ENCODE measurements at regions of chr16 and their contacts with region 1.

Region 1: DNA sequence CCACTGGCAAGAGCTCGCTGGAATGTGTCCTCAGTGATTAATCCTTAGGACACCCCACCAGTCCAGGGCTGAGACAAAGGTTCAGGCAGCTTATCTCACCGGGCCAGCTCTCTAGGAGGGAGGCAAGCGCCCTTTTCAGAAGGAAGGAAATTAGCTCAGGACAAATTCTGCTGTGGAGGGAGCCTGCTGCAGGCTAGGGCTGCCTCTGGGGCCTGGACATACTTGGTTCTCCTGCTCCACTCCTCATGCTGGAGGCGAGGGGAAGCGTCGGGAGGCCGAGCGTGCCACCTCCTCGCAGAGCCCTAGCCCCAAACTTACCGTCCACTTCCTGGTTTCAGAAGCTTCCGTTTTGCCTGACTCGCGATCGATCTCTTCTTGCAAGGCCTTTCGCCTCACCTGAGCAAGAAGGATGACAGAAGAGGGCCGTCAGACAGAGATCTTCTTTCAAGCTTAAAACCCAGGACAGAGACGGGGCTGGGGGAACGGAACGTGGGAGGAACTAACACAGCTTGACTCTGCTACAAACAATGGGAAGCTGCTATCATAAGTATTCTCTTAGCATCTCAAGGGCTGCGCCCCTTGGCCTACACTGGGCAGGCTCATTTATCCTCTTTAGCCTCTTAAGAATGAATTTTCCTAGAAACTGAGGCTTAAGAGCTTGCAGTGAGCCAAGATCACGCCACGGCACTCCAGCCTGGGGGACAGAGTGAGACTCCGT is 7.7 kb downstream of the KNOP1 start:
- DNase-seq: peak; percentile 29 to 79 (median 54)
- ATAC-seq: peak; percentile 88
- H3K4me3 ChIP-seq: no peak overlapping the region
- H3K27ac ChIP-seq: peak overlapping the region; percentile 61; the same call in 2 of the 3 replicates
- H3K4me1 ChIP-seq: peaks cover 25 to 43% of the 10 kb centered on the region in 2 experiments; a peak in 4 of 5 replicates
- H3K27me3 ChIP-seq: no peaks in the 10 kb centered on the region
- CTCF ChIP-seq: no peak
- EP300 ChIP-seq: no peak; the same call in 1 of the 2 replicates
- POLR2A ChIP-seq: no peak
- RAD21 ChIP-seq: no peak

Region 2: GRCh38 chr16:19236561-19237209 is 473.7 kb before region 1 on chr16:
- CTCF ChIA-PET with region 1: no interaction called
- POLR2A ChIA-PET with region 1: no interaction called
- in situ Hi-C with region 1: no loop called
- intact Hi-C with region 1: no loop called
- DNase-seq: no peak
- ATAC-seq: no peak
- H3K4me3 ChIP-seq: no peak overlapping the region
- H3K27ac ChIP-seq: no peak overlapping the region
- H3K4me1 ChIP-seq: peaks cover 0 to 9% of the 10 kb centered on the region in 2 experiments; a peak in 1 of 5 replicates
- H3K27me3 ChIP-seq: peaks cover 0 to 13% of the 10 kb centered on the region in 2 experiments; a peak in 2 of 5 replicates
- CTCF ChIP-seq: no peak
- EP300 ChIP-seq: no peak
- POLR2A ChIP-seq: no peak
- RAD21 ChIP-seq: no peak

Region 3: DNA sequence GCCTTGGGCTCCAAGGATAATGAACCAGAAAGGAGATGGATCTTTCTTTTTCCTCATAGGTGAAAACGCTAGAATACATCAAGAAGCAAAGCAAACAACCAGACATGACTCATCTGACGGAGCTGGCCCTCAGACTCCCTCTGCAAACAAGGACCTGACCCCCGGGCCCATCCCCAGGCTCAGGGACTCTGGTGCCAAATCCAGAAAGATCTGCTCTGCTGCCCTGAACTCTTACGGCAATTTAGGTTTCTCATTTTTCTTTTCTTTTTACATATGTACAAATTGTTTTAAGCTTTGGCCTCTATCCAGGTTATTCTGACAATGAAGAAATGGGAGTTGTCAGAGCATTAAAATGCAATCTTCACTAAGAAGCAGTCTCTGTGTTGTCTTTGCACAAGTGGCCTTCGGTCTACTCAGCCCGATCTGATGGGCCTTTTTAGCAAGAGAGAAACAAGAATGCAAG is 10.0 kb before region 1 on chr16:
- CTCF ChIA-PET with region 1: no interaction called
- POLR2A ChIA-PET with region 1: interaction called, 11 read pairs
- in situ Hi-C with region 1: no loop called
- intact Hi-C with region 1: no loop called
- DNase-seq: no peak
- ATAC-seq: no peak
- H3K4me3 ChIP-seq: no peak overlapping the region
- H3K27ac ChIP-seq: no peak overlapping the region
- H3K4me1 ChIP-seq: peaks cover 6 to 9% of the 10 kb centered on the region in 2 experiments; a peak in 4 of 5 replicates
- H3K27me3 ChIP-seq: no peaks in the 10 kb centered on the region
- CTCF ChIP-seq: no peak
- EP300 ChIP-seq: no peak
- POLR2A ChIP-seq: no peak
- RAD21 ChIP-seq: no peak